ENCODE measurements at regions of chr1 and their contacts with region 1.

Region 1: GRCh38 chr1:9573723-9574122 is 15.0 kb upstream of the TMEM201 start:
- DNase-seq: peak in 1 of 4 donors; percentile 50
- ATAC-seq: peak; percentile 31
- H3K4me3 ChIP-seq: no peak overlapping the region
- H3K27ac ChIP-seq: no peak overlapping the region
- H3K4me1 ChIP-seq: no peaks in the 10 kb centered on the region
- H3K27me3 ChIP-seq: no peaks in the 10 kb centered on the region
- CTCF ChIP-seq: no peak

Region 2: DNA sequence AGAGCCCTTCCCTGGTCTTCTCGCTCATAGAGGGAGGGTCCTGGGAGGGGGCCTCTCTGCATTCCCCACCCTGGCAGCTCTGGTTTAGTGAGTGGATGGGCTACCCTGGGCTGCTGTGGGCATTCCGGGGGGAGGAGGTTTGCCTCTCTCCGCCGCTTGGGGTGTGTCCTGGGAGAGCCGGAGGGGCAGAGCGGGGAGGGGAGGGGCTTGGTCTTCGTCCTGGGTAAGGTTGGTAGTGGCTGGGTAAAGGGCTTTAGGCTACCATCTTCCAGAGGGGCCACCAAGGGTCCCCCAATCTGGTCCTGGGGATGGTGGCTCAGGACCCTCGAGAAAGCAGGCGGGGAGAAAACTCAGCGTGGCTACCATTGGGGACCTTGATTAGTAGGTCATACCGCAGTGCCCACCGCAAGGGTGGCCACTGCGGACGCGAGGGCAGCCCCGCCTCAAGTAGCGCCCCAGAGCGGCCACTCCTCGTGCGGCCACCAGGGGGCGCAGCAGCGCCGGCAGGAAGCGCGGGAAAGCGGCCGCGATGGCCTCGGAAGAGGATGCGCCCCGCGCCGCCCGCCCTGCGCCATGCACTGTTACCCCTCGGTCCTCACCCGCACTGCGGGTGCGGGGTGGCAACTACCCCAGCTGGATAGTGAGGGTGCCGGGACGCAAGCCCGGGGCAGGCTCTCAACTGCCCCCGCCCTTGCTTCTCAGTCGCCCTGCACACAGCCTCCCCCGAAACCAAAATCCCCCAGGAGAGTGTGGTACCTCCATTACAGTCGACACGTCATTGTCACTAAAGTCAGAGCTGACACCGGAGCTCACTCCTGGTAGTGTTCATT is 78.6 kb before region 1 on chr1:
- intact Hi-C with region 1: loop called in 1 of 2 experiments (anchors 5 kb)
- DNase-seq: peak in 3 of 4 donors; percentile 51 to 93 (median 71)
- ATAC-seq: peak; percentile 79
- H3K4me3 ChIP-seq: peak overlapping the region in 1 of 2 donors; percentile 8
- H3K27ac ChIP-seq: no peak overlapping the region
- H3K4me1 ChIP-seq: peaks cover 3 to 12% of the 10 kb centered on the region in 2 donors
- H3K27me3 ChIP-seq: peaks cover 0 to 14% of the 10 kb centered on the region in 2 donors
- CTCF ChIP-seq: peak; percentile 94 to 98

Measured in left lung (tissue), 14 donors.